Heart right ventricle (tissue), 16 donors: ENCODE measurements at regions of chr3 and their contacts with region 1.

Region 1: GRCh38 chr3:64345371-64345770 is 120.1 kb upstream of the PRICKLE2 start:
- DNase-seq: no peak
- ATAC-seq: peak; percentile 57 to 89 (median 64)
- H3K4me3 ChIP-seq: no peak overlapping the region
- H3K27ac ChIP-seq: peak overlapping the region in 2 of 10 donors; percentile 2 to 4
- H3K4me1 ChIP-seq: peaks cover 0 to 30% (median 12%) of the 10 kb centered on the region in 9 donors
- H3K27me3 ChIP-seq: no peaks in the 10 kb centered on the region
- CTCF ChIP-seq: no peak

Region 2: DNA sequence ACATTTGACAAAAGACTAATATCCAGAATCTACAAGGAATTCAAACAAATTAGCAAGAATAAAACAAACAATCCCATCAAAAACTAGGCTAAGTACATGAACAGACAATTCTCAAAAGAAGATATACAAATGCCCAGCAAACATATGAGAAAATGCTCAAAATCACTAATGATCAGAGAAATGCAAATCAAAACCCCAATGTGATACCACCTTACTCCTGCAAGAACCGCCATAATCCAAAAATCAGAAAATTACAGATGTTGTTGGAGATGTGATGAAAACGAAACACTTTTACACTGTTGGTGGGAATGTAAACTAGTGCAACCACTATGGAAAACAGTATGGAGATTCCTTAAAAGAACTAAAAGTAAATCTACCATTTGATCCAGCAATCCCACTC is 613.5 kb before region 1 on chr3:
- intact Hi-C with region 1: no loop called
- DNase-seq: no peak
- ATAC-seq: no peak
- H3K4me3 ChIP-seq: no peak overlapping the region
- H3K27ac ChIP-seq: no peak overlapping the region
- H3K4me1 ChIP-seq: no peaks in the 10 kb centered on the region
- H3K27me3 ChIP-seq: peaks cover 0 to 3% (median 0%) of the 10 kb centered on the region in 7 donors
- CTCF ChIP-seq: no peak

Region 3: GRCh38 chr3:64084640-64085039 is 260.7 kb before region 1 on chr3:
- intact Hi-C with region 1: no loop called
- DNase-seq: no peak
- ATAC-seq: no peak
- H3K4me3 ChIP-seq: no peak overlapping the region
- H3K27ac ChIP-seq: no peak overlapping the region
- H3K4me1 ChIP-seq: peaks cover 0 to 12% (median 3%) of the 10 kb centered on the region in 9 donors
- H3K27me3 ChIP-seq: no peaks in the 10 kb centered on the region
- CTCF ChIP-seq: no peak

Region 4: DNA sequence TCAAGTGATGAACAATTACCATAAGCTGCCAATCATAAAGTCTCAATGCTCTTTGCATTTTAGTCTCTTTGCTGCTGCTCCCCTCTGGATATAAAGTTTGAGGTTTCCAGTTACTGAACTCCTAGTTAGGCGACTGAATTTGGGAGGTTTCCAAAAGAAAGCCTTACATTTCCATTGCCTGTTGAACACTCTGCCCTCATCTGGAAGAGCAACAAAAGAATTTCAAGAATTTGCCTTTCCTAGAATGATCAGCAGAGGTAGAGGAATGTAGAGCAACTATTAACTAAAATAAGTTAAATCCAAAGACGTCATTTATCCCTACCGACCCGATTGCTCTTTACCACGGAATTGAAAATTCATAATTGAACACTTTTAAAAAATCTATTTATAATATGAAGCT is 66.7 kb before region 1 on chr3:
- intact Hi-C with region 1: loop called in 1 of 10 experiments (anchors 10 kb)
- DNase-seq: no peak
- ATAC-seq: no peak
- H3K4me3 ChIP-seq: no peak overlapping the region
- H3K27ac ChIP-seq: no peak overlapping the region
- H3K4me1 ChIP-seq: no peaks in the 10 kb centered on the region
- H3K27me3 ChIP-seq: no peaks in the 10 kb centered on the region
- CTCF ChIP-seq: no peak

Region 5: DNA sequence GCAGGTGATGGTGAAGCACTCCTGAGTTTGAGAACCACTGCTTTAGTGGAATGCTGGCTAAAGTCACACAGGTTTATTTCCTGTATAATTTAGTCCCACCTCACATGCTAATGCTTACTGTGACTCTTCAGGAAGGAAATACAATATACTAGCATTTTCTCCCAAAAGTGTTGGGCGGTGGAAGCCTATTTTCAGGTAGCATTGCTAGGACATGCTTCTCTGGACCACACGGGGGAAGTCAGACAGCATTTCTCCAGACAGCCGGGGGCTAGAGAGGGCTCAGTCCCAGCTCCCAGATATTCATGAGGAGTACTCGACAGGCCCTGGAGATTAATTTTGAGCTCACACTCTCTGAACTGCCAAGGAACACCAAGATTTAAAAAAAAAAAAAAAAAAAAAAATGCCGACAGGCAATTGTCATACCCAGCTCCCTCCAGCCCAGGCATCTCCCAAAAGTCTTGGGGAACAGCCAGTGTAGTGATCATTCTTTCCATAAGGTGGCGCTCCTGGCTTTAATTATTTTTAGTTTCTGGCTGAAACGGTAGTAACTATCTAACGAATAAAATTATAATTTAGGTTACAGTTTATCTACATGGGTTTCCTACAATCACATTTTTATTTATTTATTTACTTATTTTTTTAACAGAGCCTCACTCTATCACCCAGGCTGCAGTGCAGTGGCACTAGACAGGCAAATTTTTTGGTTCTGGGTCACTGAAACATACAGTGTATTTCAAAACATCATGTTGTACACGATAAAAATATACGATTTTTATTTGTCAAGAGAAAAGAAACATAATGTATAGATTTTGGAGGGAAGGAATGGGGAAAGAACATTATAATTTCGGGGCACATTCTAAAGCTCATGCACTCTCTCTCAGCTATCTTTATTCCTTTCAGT is 185.0 kb after region 1 on chr3:
- intact Hi-C with region 1: no loop called
- DNase-seq: peak in 1 of 2 donors; percentile 79
- ATAC-seq: peak in 7 of 8 donors; percentile 14 to 43 (median 22)
- H3K4me3 ChIP-seq: no peak overlapping the region
- H3K27ac ChIP-seq: no peak overlapping the region
- H3K4me1 ChIP-seq: peaks cover 0 to 23% (median 11%) of the 10 kb centered on the region in 9 donors
- H3K27me3 ChIP-seq: no peaks in the 10 kb centered on the region
- CTCF ChIP-seq: peak; percentile 53 to 80 (median 74)

Region 6: GRCh38 chr3:64717872-64718613 is 372.7 kb after region 1 on chr3:
- intact Hi-C with region 1: no loop called
- DNase-seq: no peak
- ATAC-seq: no peak
- H3K4me3 ChIP-seq: no peak overlapping the region
- H3K27ac ChIP-seq: no peak overlapping the region
- H3K4me1 ChIP-seq: peaks cover 0 to 29% (median 14%) of the 10 kb centered on the region in 9 donors
- H3K27me3 ChIP-seq: no peaks in the 10 kb centered on the region
- CTCF ChIP-seq: peak in 8 of 9 donors; percentile 23 to 65 (median 54)